ENCODE measurements at regions of chr13 and their contacts with region 1.

Region 1: GRCh38 chr13:109779074-109779473 is 7.3 kb downstream of the IRS2 start:
- DNase-seq: peak; percentile 36
- H3K4me3 ChIP-seq: peak overlapping the region; percentile 73 to 84
- H3K27ac ChIP-seq: peak overlapping the region; percentile 64 to 96
- H3K4me1 ChIP-seq: peaks cover 9 to 18% of the 10 kb centered on the region in 2 experiments; a peak in 3 of 4 replicates
- H3K27me3 ChIP-seq: no peaks in the 10 kb centered on the region
- CTCF ChIP-seq: no peak
- EP300 ChIP-seq: no peak
- RAD21 ChIP-seq: no peak

Region 2: DNA sequence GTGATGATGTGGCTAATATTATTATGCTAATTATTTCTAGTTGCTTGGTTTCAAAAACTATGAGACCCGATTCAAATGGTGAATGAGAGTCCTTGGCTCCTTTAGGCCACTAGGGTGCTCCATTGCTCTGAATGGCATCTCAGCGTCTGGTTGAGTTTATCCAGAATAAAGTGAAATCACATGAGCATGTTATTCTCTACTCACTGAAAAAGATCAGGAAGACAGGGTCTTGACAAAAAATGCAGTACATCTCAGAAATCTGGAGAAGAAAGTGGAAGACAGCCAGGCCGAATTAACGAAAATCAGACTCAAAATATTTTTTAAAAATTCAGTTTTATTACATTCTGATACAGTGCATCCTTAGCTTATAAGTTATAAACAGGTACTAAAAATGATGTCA is 633.4 kb before region 1 on chr13:
- CTCF ChIA-PET with region 1: interaction called, 27 read pairs
- POLR2A ChIA-PET with region 1: interaction called, 4 read pairs
- DNase-seq: peak; percentile 79
- H3K4me3 ChIP-seq: peak overlapping the region in 1 of 2 experiments; percentile 30; a peak in 1 of 4 replicates
- H3K27ac ChIP-seq: peak overlapping the region; percentile 61 to 90; a peak in 3 of 4 replicates
- H3K4me1 ChIP-seq: peaks cover 31 to 34% of the 10 kb centered on the region in 2 experiments; a peak in 3 of 4 replicates
- H3K27me3 ChIP-seq: no peaks in the 10 kb centered on the region
- CTCF ChIP-seq: peak; percentile 93
- EP300 ChIP-seq: peak in 1 of 2 experiments; percentile 57; a peak in 2 of 4 replicates
- RAD21 ChIP-seq: peak; percentile 98

Region 3: DNA sequence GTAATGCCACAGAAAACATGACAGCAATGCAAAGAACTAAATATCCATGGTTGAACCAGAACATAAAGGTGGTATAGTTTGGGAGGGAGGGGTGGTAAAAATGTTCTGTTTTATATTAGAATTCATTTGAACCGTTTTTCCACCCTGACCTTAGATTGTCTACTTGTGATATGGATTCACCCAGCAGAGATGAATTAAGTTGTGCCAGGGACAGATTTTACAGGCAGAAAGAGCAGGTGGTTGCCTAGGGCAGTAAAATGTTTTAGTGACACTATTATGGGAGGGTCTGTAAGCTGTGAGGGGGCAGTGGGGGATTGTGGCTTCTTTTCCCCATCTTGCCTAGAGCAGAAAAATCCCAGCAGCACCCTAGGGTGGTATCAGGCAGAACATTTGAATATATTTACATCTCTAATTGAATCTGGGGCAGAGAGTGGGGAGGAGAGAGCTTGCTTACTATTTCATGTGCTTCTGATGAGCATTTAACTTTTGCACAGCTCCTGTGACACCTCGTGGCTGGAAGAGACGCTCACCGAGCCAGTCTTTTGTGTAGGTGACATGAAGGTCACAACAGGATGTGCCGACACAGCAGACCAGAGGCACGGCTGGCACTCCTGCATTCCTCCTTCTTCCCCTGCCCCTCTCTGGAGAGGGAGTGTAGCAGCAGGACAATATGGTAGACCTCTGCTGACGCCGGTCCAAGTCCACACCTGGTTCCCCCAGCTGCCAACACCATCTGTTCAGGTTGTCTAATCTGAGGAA is 445.0 kb before region 1 on chr13:
- CTCF ChIA-PET with region 1: interaction called, 12 read pairs
- POLR2A ChIA-PET with region 1: interaction called, 4 read pairs
- DNase-seq: peak; percentile 64
- H3K4me3 ChIP-seq: no peak overlapping the region; a peak in 1 of 4 replicates
- H3K27ac ChIP-seq: peak overlapping the region in 1 of 2 experiments; percentile 100; a peak in 2 of 4 replicates
- H3K4me1 ChIP-seq: peaks cover 22 to 38% of the 10 kb centered on the region in 2 experiments; a peak in 3 of 4 replicates
- H3K27me3 ChIP-seq: no peaks in the 10 kb centered on the region
- CTCF ChIP-seq: no peak
- EP300 ChIP-seq: peak in 1 of 2 experiments; percentile 100; a peak in 2 of 4 replicates
- RAD21 ChIP-seq: peak; percentile 42

Region 4: DNA sequence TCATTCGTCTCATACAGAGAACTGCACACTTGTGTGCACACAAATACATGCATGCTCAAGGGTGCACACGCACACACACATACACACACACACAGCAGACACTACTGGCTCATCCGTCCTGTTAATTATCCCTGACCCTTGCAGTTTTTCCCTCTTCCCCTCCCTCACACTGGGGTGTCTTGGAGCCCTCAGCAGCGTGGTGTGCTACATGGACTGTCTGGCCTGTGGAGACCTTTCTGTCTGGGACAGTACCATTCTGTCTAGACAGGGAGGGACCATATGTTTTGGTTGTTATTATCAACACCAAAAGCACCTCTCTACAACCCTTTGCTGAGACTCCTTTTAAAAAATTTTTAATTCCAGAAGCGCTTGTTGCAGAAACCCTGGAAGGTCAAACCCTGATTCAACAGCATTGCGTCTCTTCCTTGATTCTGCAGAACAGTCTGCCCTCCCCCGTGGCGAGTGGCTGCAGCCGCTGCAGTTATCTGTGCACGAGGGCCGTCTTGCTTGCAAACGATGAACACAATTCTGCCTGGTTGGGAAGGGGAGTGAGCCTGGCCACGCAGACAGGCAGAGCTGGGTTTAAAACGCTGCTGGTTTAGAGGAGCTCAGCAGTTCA is 366.7 kb before region 1 on chr13:
- CTCF ChIA-PET with region 1: interaction called, 3 read pairs
- POLR2A ChIA-PET with region 1: interaction called, 16 read pairs
- DNase-seq: peak; percentile 76
- H3K4me3 ChIP-seq: peak overlapping the region in 1 of 2 experiments; percentile 14; a peak in 1 of 4 replicates
- H3K27ac ChIP-seq: peak overlapping the region in 1 of 2 experiments; percentile 99; a peak in 2 of 4 replicates
- H3K4me1 ChIP-seq: peaks cover 20 to 30% of the 10 kb centered on the region in 2 experiments; a peak in 3 of 4 replicates
- H3K27me3 ChIP-seq: no peaks in the 10 kb centered on the region
- CTCF ChIP-seq: no peak
- EP300 ChIP-seq: peak in 1 of 2 experiments; percentile 34; a peak in 1 of 4 replicates
- RAD21 ChIP-seq: peak; percentile 49; the same call in 1 of the 2 replicates

Region 5: GRCh38 chr13:109667056-109667455 is 112.0 kb before region 1 on chr13:
- CTCF ChIA-PET with region 1: interaction called, 4 read pairs
- POLR2A ChIA-PET with region 1: interaction called, 21 read pairs
- DNase-seq: peak; percentile 53
- H3K4me3 ChIP-seq: peak overlapping the region in 1 of 2 experiments; percentile 35; a peak in 2 of 4 replicates
- H3K27ac ChIP-seq: peak overlapping the region; percentile 49 to 100
- H3K4me1 ChIP-seq: peaks cover 7 to 50% of the 10 kb centered on the region in 2 experiments; a peak in 3 of 4 replicates
- H3K27me3 ChIP-seq: no peaks in the 10 kb centered on the region
- CTCF ChIP-seq: no peak
- EP300 ChIP-seq: no peak
- RAD21 ChIP-seq: no peak

Region 6: DNA sequence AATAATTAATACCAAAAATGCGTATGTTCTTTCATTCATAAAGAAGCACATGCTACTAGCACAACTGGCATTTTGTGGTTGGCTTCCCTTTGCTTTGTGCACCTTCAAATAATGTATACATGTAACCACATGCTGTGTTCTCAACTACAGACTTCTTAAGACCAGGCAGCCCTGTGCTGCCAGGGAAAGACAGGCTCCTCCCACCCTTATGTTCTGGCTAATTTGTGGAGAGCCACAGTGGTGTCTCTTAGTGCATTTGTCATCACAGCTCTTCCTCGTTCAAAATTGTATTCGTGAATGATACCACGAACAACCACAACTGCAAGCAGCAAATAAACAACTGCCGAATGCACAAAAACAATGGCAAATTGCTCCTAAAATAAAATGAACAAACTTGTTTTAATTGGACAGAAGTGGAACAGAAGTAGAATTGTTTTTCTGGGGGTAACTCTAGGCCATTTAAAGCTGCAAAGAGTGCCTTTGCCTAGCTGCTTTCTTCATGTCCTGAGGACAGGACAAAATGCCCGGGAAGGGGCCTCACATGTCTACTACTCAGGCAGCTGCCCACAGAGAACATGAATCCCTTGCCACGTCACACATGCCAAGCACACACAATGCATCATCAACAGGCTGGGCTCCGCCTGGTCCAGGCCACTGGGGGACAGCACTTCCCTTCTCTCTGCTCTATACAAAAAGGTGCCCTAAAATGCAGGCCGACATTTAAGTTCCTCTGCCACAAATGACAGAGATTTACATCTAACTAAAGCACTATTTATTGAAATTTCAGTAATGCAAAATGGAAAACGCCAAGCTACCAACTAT is 14.4 kb before region 1 on chr13:
- CTCF ChIA-PET with region 1: interaction called, 15 read pairs
- POLR2A ChIA-PET with region 1: no interaction called
- DNase-seq: peak; percentile 64
- H3K4me3 ChIP-seq: no peak overlapping the region
- H3K27ac ChIP-seq: peak overlapping the region in 1 of 2 experiments; percentile 65; a peak in 2 of 4 replicates
- H3K4me1 ChIP-seq: peaks cover 36 to 69% of the 10 kb centered on the region in 2 experiments; a peak in 3 of 4 replicates
- H3K27me3 ChIP-seq: no peaks in the 10 kb centered on the region
- CTCF ChIP-seq: peak; percentile 32; the same call in 1 of the 2 replicates
- EP300 ChIP-seq: no peak
- RAD21 ChIP-seq: peak; percentile 47

Region 7: GRCh38 chr13:109874484-109875454 is 95.7 kb after region 1 on chr13:
- CTCF ChIA-PET with region 1: no interaction called
- POLR2A ChIA-PET with region 1: no interaction called
- DNase-seq: no peak
- H3K4me3 ChIP-seq: no peak overlapping the region
- H3K27ac ChIP-seq: peak overlapping the region in 1 of 2 experiments; percentile 39; a peak in 1 of 4 replicates
- H3K4me1 ChIP-seq: peaks cover 7 to 12% of the 10 kb centered on the region in 2 experiments; a peak in 3 of 4 replicates
- H3K27me3 ChIP-seq: no peaks in the 10 kb centered on the region
- CTCF ChIP-seq: no peak
- EP300 ChIP-seq: peak in 1 of 2 experiments; percentile 42; a peak in 1 of 4 replicates
- RAD21 ChIP-seq: no peak

Measured in SK-N-SH (cell line).